Dorsolateral prefrontal cortex (tissue), 120 donors: ENCODE measurements at regions of chr6 and their contacts with region 1.

Region 1: DNA sequence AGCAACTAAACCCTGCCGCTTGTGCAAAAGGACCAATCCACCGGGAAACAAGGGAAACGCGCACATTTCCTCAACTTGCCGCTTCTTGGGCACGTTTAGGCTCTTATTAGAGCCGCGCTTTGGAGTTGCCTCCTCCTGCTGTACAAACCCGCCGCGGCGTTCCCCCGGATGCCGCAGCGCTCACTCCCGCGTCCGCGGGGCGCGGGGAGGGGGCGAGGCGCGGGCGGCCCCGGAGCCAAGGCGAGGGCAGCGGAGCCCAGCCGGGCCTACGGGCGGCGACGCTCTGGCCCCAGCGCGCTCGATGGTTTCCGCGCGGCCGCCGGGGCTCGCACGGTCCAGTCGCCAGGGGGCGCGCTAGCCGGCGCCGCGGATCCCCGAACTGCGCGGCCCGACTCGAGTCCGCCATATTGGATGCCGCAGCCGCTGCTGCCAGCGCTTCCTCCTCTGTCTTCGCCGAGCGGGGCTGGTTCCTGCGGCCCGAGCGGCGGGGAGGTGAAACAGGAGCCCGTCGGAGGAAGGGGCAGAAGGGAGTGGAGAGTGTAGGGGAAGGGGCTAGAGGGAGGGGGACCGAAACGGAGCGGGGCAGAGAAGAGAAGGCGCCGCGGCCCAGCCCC is at the start of gene SCAF8:
- DNase-seq: peak; percentile 46 to 90 (median 68)
- H3K4me3 ChIP-seq: peak within 1 kb of the TSS; percentile 55 to 100 (median 92)
- H3K27ac ChIP-seq: peak within 1 kb of the TSS; percentile 95 to 100 (median 100)
- H3K27me3 ChIP-seq: no peaks in the 10 kb centered on the region
- CTCF ChIP-seq: peak; percentile 49 to 97 (median 75)
- total RNA-seq, gene SCAF8: 46.7 to 79.8 (median 61.4) TPM

Region 2: GRCh38 chr6:154030646-154031045 is 702.5 kb before region 1 on chr6:
- intact Hi-C with region 1: no loop called
- DNase-seq: no peak
- H3K4me3 ChIP-seq: no peak overlapping the region
- H3K27ac ChIP-seq: no peak overlapping the region
- H3K27me3 ChIP-seq: peaks cover 0 to 6% (median 0%) of the 10 kb centered on the region in 45 donors
- CTCF ChIP-seq: no peak

Region 3: GRCh38 chr6:154510143-154510905 is 222.8 kb before region 1 on chr6 and contains the start of gene CNKSR3:
- intact Hi-C with region 1: loop called in 1 of 2 experiments (anchors 10 kb)
- DNase-seq: peak; percentile 28 to 79 (median 71)
- H3K4me3 ChIP-seq: peak within 1 kb of the TSS; percentile 40 to 93 (median 82)
- H3K27ac ChIP-seq: peak within 1 kb of the TSS; percentile 69 to 96 (median 90)
- H3K27me3 ChIP-seq: no peaks in the 10 kb centered on the region
- CTCF ChIP-seq: peak in 27 of 56 donors; percentile 4 to 49 (median 18)
- total RNA-seq, gene CNKSR3: 7.3 to 35.6 (median 15.0) TPM

Region 4: GRCh38 chr6:154805288-154805911 is 72.3 kb after region 1 on chr6:
- intact Hi-C with region 1: loop called (anchors 1 to 2 kb)
- DNase-seq: no peak
- H3K4me3 ChIP-seq: no peak overlapping the region
- H3K27ac ChIP-seq: peak overlapping the region in 3 of 59 donors; percentile 3 to 43 (median 18)
- H3K27me3 ChIP-seq: no peaks in the 10 kb centered on the region
- CTCF ChIP-seq: peak; percentile 42 to 83 (median 64)

Region 5: GRCh38 chr6:155253337-155253736 is 520.2 kb after region 1 on chr6:
- intact Hi-C with region 1: loop called in 1 of 2 experiments (anchors 10 kb)
- DNase-seq: no peak
- H3K4me3 ChIP-seq: no peak overlapping the region
- H3K27ac ChIP-seq: peak overlapping the region in 31 of 59 donors; percentile 1 to 59 (median 30)
- H3K27me3 ChIP-seq: no peaks in the 10 kb centered on the region
- CTCF ChIP-seq: no peak